GM12878 (cell line): ENCODE measurements at regions of chr1 and their contacts with region 1.

Region 1: GRCh38 chr1:185681034-185681633 is 53.1 kb upstream of the HMCN1 start:
- DNase-seq: peak; percentile 21
- ATAC-seq: peak; percentile 89
- H3K4me3 ChIP-seq: no peak overlapping the region
- H3K27ac ChIP-seq: no peak overlapping the region
- H3K4me1 ChIP-seq: no peaks in the 10 kb centered on the region
- H3K27me3 ChIP-seq: no peaks in the 10 kb centered on the region
- CTCF ChIP-seq: peak; percentile 43 to 65 (median 49); a peak in 4 of 6 replicates
- EP300 ChIP-seq: no peak
- POLR2A ChIP-seq: no peak
- RAD21 ChIP-seq: peak; percentile 74

Region 2: GRCh38 chr1:185238447-185238846 is 442.7 kb before region 1 on chr1:
- CTCF ChIA-PET with region 1: interaction called, 48 read pairs
- POLR2A ChIA-PET with region 1: no interaction called
- RAD21 ChIA-PET with region 1: interaction called, 30 read pairs
- SMC1A ChIA-PET with region 1: interaction called, 12 read pairs
- in situ Hi-C with region 1: no loop called
- intact Hi-C with region 1: no loop called
- DNase-seq: no peak
- ATAC-seq: peak; percentile 50
- H3K4me3 ChIP-seq: no peak overlapping the region
- H3K27ac ChIP-seq: no peak overlapping the region
- H3K4me1 ChIP-seq: no peaks in the 10 kb centered on the region
- H3K27me3 ChIP-seq: no peaks in the 10 kb centered on the region
- CTCF ChIP-seq: peak; percentile 29 to 40 (median 29); a peak in 4 of 6 replicates
- EP300 ChIP-seq: no peak
- POLR2A ChIP-seq: no peak
- RAD21 ChIP-seq: peak; percentile 39

Region 3: GRCh38 chr1:185652348-185652747 is 28.8 kb before region 1 on chr1:
- CTCF ChIA-PET with region 1: interaction called, 14 read pairs
- POLR2A ChIA-PET with region 1: no interaction called
- RAD21 ChIA-PET with region 1: interaction called, 5 read pairs
- SMC1A ChIA-PET with region 1: interaction called, 7 read pairs
- in situ Hi-C with region 1: no loop called
- intact Hi-C with region 1: no loop called
- DNase-seq: no peak
- ATAC-seq: no peak
- H3K4me3 ChIP-seq: no peak overlapping the region
- H3K27ac ChIP-seq: no peak overlapping the region
- H3K4me1 ChIP-seq: no peaks in the 10 kb centered on the region
- H3K27me3 ChIP-seq: no peaks in the 10 kb centered on the region
- CTCF ChIP-seq: peak in 2 of 3 experiments; percentile 6 to 7; a peak in 2 of 6 replicates
- EP300 ChIP-seq: no peak
- POLR2A ChIP-seq: no peak
- RAD21 ChIP-seq: 0 out of 2 replicates have a peak, but pooled peaks have one; percentile 11

Region 4: DNA sequence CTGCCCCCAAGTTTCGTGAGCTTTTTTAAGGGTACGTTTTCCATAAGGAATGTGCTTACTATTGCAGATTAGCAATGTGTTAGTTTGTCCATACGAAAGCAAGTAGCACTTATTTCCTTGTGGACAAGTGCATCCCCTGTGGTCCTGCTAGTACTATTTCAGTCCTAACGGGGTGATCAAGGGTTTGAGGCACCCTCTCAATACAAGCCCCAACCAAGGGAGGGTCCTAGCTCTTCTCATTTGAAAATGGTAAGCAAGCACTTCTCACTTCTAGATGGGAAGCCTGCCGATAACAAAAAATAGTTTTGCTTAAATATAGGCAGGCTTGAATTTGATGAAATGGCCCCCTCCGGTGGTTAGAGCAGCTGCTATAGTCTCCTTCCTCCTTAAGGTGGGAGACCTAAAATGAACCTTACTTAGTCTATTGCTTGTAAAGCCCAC is 10.9 kb before region 1 on chr1:
- CTCF ChIA-PET with region 1: interaction called, 27 read pairs
- POLR2A ChIA-PET with region 1: no interaction called
- RAD21 ChIA-PET with region 1: interaction called, 7 read pairs
- SMC1A ChIA-PET with region 1: interaction called, 19 read pairs
- in situ Hi-C with region 1: no loop called
- intact Hi-C with region 1: no loop called
- DNase-seq: no peak
- ATAC-seq: peak; percentile 69
- H3K4me3 ChIP-seq: no peak overlapping the region
- H3K27ac ChIP-seq: no peak overlapping the region
- H3K4me1 ChIP-seq: no peaks in the 10 kb centered on the region
- H3K27me3 ChIP-seq: no peaks in the 10 kb centered on the region; a peak in 1 of 4 replicates
- CTCF ChIP-seq: peak; percentile 18 to 39 (median 21); a peak in 3 of 6 replicates
- EP300 ChIP-seq: no peak
- POLR2A ChIP-seq: no peak
- RAD21 ChIP-seq: peak; percentile 55

Region 5: GRCh38 chr1:185727726-185728125 is 46.6 kb after region 1 on chr1:
- CTCF ChIA-PET with region 1: no interaction called
- POLR2A ChIA-PET with region 1: no interaction called
- RAD21 ChIA-PET with region 1: no interaction called
- SMC1A ChIA-PET with region 1: no interaction called
- in situ Hi-C with region 1: no loop called
- intact Hi-C with region 1: no loop called
- DNase-seq: no peak
- ATAC-seq: no peak
- H3K4me3 ChIP-seq: no peak overlapping the region
- H3K27ac ChIP-seq: no peak overlapping the region
- H3K4me1 ChIP-seq: no peaks in the 10 kb centered on the region
- H3K27me3 ChIP-seq: no peaks in the 10 kb centered on the region
- CTCF ChIP-seq: no peak
- EP300 ChIP-seq: no peak
- POLR2A ChIP-seq: no peak
- RAD21 ChIP-seq: no peak

Region 6: GRCh38 chr1:185880779-185881333 is 199.7 kb after region 1 on chr1:
- CTCF ChIA-PET with region 1: no interaction called
- POLR2A ChIA-PET with region 1: no interaction called
- RAD21 ChIA-PET with region 1: no interaction called
- SMC1A ChIA-PET with region 1: no interaction called
- in situ Hi-C with region 1: no loop called
- intact Hi-C with region 1: no loop called
- DNase-seq: no peak
- ATAC-seq: no peak
- H3K4me3 ChIP-seq: no peak overlapping the region
- H3K27ac ChIP-seq: no peak overlapping the region
- H3K4me1 ChIP-seq: no peaks in the 10 kb centered on the region
- H3K27me3 ChIP-seq: no peaks in the 10 kb centered on the region
- CTCF ChIP-seq: no peak
- EP300 ChIP-seq: no peak
- POLR2A ChIP-seq: no peak
- RAD21 ChIP-seq: no peak

Region 7: DNA sequence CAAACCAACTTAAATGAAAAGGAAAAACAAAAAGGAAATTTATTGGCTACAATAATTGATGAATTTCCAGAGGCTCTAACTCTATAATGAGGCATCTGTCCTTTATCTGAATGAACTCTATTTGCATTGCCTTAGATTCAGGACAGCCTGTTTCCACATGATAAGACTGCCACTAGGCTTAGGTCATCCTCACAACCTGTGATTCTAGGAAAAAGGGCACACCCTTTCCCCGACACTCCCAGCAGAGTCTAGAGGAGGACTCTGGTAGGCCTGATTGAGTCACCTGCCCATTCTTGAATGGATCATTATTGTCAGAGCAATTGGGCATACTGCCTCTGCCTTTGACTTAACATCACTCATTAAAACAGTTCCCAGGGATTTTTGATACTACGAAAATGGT is 431.1 kb after region 1 on chr1:
- CTCF ChIA-PET with region 1: no interaction called
- POLR2A ChIA-PET with region 1: no interaction called
- RAD21 ChIA-PET with region 1: no interaction called
- SMC1A ChIA-PET with region 1: no interaction called
- in situ Hi-C with region 1: no loop called
- intact Hi-C with region 1: no loop called
- DNase-seq: no peak
- ATAC-seq: no peak
- H3K4me3 ChIP-seq: no peak overlapping the region
- H3K27ac ChIP-seq: no peak overlapping the region
- H3K4me1 ChIP-seq: no peaks in the 10 kb centered on the region
- H3K27me3 ChIP-seq: no peaks in the 10 kb centered on the region
- CTCF ChIP-seq: no peak
- EP300 ChIP-seq: no peak
- POLR2A ChIP-seq: no peak
- RAD21 ChIP-seq: no peak